Endothelial cell of umbilical vein (primary cell): ENCODE measurements at regions of chr7 and their contacts with region 1.

Region 1: DNA sequence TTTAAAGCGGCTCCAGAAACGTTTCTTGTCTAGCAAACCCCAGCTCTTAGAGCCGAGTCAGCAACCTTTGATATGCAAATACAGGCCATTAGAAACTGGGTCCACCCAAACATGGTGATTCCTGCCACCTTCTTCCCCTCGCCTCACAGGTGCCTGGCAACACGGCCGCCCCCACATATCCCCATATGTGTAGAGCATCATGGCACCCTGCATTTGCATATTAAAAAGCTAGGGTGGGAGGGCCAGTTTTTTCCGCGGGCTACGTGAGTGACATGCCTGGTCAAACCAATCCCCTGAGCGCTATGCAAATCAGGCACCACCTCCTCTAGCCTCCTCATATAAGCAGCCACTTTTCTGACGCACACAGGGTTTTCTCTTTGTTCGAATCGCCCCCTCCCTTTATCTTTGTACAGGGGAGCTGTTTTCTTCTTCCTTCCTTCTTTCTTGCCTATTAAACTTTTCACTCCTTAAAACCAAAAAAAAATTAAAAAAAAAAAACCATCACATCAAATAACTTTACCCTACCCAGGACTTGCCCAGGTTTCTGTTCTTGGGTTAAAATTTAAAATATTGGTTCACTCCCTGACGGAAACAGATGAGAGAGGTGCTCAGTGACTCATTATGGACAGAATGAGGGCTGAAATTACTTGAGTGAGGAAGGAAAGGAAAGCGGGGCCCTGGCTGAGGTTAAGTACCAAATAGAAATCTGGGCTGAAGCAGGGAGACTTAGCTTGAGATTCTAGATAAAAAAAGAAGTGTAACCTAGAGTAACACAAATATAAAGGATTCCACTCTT is 59.8 kb downstream of the COA1 start:
- DNase-seq: peak; percentile 33
- H3K4me3 ChIP-seq: no peak overlapping the region
- H3K27ac ChIP-seq: peak overlapping the region; percentile 9
- H3K4me1 ChIP-seq: peaks cover 22% of the 10 kb centered on the region
- H3K27me3 ChIP-seq: no peaks in the 10 kb centered on the region
- CTCF ChIP-seq: no peak
- POLR2A ChIP-seq: no peak

Region 2: GRCh38 chr7:43535031-43535451 is 134.4 kb before region 1 on chr7:
- CTCF ChIA-PET with region 1: no interaction called
- POLR2A ChIA-PET with region 1: no interaction called
- dilution Hi-C with region 1: no loop called
- intact Hi-C with region 1: no loop called
- DNase-seq: no peak
- H3K4me3 ChIP-seq: no peak overlapping the region
- H3K27ac ChIP-seq: no peak overlapping the region
- H3K4me1 ChIP-seq: no peaks in the 10 kb centered on the region
- H3K27me3 ChIP-seq: peaks cover 4 to 18% of the 10 kb centered on the region in 2 experiments
- CTCF ChIP-seq: no peak
- POLR2A ChIP-seq: no peak

Region 3: DNA sequence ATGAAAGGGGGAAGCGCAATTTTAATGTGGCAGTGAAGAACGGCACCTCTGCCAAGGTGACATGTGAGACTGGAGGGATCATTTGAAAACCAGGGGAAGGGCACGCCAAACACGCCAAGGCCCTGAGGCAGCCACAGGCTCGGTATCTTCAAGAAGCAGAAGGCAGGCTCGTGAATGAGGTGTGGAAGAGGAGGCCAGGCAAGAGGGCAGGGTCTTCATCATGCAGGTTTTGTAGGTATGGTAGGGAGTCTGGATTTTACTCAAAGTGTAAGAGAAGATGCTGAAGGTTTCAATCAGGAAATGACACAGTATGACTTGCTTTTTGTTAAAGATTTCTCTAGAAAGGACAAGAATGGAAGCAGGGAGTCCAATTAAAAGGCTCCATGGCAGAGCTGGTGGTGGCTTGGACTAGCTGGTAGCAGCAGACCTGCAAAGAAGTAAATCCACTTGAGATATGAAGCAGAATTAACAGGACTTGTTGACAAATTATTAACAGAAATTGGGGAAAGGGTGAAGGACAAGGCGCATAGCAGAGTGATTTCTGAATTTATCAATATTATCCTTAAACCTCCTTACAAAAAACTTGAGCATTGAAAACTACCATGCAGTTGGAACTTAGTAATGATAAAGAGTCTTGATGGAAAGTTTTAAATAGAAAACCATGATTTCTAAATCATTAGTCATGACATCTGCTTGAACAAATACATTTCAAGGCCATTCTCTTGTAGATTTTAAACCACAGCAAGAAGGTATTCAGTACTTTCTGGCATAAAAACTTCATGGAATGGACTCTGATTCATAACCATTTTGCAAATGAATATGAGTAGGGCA is 10.6 kb before region 1 on chr7:
- CTCF ChIA-PET with region 1: interaction called, 3 read pairs
- POLR2A ChIA-PET with region 1: no interaction called
- dilution Hi-C with region 1: no loop called
- intact Hi-C with region 1: loop called (anchors 1 kb)
- DNase-seq: peak; percentile 36
- H3K4me3 ChIP-seq: no peak overlapping the region
- H3K27ac ChIP-seq: no peak overlapping the region
- H3K4me1 ChIP-seq: peaks cover 10% of the 10 kb centered on the region
- H3K27me3 ChIP-seq: no peaks in the 10 kb centered on the region
- CTCF ChIP-seq: no peak
- POLR2A ChIP-seq: no peak

Region 4: GRCh38 chr7:44163591-44163990 is 494.1 kb after region 1 on chr7:
- CTCF ChIA-PET with region 1: no interaction called
- POLR2A ChIA-PET with region 1: no interaction called
- dilution Hi-C with region 1: no loop called
- intact Hi-C with region 1: no loop called
- DNase-seq: no peak
- H3K4me3 ChIP-seq: no peak overlapping the region
- H3K27ac ChIP-seq: no peak overlapping the region
- H3K4me1 ChIP-seq: no peaks in the 10 kb centered on the region
- H3K27me3 ChIP-seq: peaks cover 19 to 36% of the 10 kb centered on the region in 2 experiments
- CTCF ChIP-seq: no peak
- POLR2A ChIP-seq: no peak

Region 5: GRCh38 chr7:44693721-44694285 is 1024.3 kb after region 1 on chr7:
- CTCF ChIA-PET with region 1: no interaction called
- POLR2A ChIA-PET with region 1: no interaction called
- dilution Hi-C with region 1: no loop called
- intact Hi-C with region 1: no loop called
- DNase-seq: no peak
- H3K4me3 ChIP-seq: no peak overlapping the region
- H3K27ac ChIP-seq: no peak overlapping the region
- H3K4me1 ChIP-seq: no peaks in the 10 kb centered on the region
- H3K27me3 ChIP-seq: no peaks in the 10 kb centered on the region
- CTCF ChIP-seq: no peak
- POLR2A ChIP-seq: no peak